ENCODE measurements at regions of chr11 and their contacts with region 1.

Region 1: GRCh38 chr11:44269369-44270351 is 40.3 kb downstream of the ALX4 start:
- DNase-seq: no peak

Region 2: GRCh38 chr11:44110231-44110679 is 159.4 kb before region 1 on chr11:
- in situ Hi-C with region 1: loop called (anchors 25 kb)
- DNase-seq: peak; percentile 64

Region 3: DNA sequence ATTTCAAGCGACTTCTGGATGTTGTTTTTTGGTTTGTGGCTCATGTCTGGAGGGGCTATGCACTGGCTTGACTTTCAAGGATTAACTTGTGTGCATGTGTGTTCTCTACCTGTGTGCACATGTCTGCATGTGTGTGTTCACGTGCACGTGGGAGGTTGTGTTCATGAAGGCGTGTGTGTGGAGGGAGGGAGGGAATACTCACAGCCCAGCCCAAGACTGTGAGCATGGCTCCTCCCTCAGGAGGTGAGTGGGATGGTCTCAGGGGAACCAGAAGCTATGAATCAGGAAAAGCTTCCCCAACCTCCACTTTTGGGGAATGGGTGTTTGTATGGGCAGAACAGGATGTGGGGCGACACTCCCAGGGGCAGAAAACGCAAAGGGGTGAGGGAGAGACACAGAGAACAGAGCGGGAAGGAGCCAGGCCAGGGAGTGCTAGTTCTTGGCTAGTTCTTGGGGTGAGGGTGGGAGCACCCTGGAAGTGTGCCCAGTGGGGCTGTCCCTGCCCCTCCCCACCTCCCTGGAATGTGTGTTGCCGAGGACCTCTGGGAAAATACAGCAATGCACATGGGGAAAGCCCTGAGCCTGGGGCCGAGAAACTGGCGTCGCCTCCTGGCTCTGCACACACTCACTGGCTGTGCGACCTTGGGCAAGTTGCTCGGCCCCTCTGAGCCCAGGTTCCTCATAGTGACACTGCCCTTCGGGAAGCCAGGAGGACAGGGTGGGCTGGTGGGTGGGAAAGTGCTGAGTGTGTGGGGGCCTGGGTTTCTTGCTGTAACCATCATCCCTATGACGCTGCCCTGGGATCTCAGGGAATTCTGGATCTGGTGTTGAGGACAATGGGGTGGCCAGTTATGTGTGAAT is 57.2 kb after region 1 on chr11:
- in situ Hi-C with region 1: no loop called
- DNase-seq: no peak